Natural killer cell (primary cell): ENCODE measurements at regions of chr7 and their contacts with region 1.

Region 1: DNA sequence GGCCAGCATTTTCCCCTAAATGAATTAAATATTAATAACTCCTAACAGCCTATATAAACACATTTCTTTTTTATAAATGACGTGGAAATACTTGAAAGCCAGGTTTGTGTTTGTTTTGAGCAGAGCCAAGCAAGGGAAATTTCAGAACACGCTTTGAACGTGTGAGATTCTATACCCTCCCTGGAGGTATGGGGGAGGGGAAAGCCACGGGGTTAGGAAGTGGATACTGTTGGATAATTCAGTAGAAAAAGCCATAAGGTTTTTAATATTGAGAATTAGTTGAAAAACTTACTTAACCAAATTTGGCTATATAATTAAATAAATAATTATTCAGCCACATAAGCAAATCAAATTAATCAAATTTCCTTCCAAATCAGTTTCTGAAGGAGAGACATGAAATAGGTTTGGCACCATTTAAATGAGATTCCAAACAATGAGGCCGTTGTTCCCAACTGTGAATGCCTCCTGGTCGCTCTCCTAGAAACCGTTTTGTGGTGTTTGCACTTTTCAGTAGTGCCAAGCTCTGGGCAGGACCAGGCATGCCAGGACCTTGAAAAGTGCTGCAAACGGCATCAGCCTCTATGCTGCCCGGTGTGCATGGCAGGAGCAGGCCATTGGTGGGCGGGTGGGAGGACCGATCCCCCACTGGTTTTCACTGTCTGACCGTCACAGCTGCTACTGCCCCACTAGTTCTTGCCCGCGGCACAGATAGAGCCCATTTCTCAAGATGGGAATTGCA is 88.1 kb downstream of the SEPTIN14 start:
- DNase-seq: no peak
- ATAC-seq: no peak
- H3K4me3 ChIP-seq: no peak overlapping the region
- H3K4me3 Mint-ChIP-seq: no peak overlapping the region
- H3K27ac ChIP-seq: no peak overlapping the region
- H3K27ac Mint-ChIP-seq: no peak overlapping the region
- H3K4me1 ChIP-seq: no peaks in the 10 kb centered on the region
- H3K4me1 Mint-ChIP-seq: no peaks in the 10 kb centered on the region
- H3K27me3 ChIP-seq: no peaks in the 10 kb centered on the region
- H3K27me3 Mint-ChIP-seq: no peaks in the 10 kb centered on the region
- CTCF ChIP-seq: no peak

Region 2: DNA sequence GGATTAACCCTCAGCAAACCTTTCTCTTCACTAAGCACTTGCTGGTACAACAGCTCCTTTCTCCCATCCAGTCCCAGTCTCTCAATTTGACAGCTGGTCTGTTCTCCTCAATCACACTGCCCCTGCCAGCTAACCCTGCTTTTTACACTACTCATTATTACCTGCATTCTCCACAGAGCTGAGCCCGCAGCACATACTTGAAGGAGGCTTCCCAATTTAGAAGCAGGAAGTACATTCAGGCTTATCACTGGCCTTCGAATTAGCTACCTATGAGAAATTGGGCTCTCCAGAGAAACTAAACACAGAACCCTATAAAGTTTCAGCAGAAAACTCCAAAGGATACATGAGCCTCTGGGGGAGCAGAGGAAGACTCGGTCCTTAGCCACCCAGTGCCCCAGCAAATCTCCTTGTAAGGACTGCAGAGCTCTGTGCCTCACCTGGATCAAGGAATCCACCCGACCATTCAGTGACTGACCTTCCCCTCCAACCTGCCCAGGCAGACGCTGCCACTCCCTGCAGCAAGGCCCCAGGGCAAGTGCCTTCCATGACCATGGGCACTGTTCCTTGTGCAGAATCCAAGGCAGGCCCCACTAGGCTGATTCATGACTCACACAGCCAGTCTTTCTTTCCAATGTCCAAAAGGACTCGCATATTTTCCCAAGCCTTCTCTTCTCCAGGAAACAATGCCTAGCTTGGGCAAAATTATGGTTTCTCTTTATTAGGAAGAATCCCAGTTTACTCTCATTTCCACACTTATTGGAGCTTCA is 270.2 kb before region 1 on chr7:
- intact Hi-C with region 1: no loop called
- DNase-seq: no peak
- ATAC-seq: no peak
- H3K4me3 ChIP-seq: no peak overlapping the region
- H3K4me3 Mint-ChIP-seq: no peak overlapping the region
- H3K27ac ChIP-seq: no peak overlapping the region
- H3K27ac Mint-ChIP-seq: peak overlapping the region; percentile 70 to 79
- H3K4me1 ChIP-seq: peaks cover 2% of the 10 kb centered on the region
- H3K4me1 Mint-ChIP-seq: peaks cover 60% of the 10 kb centered on the region in 2 donors
- H3K27me3 ChIP-seq: no peaks in the 10 kb centered on the region
- H3K27me3 Mint-ChIP-seq: no peaks in the 10 kb centered on the region
- CTCF ChIP-seq: no peak

Region 3: DNA sequence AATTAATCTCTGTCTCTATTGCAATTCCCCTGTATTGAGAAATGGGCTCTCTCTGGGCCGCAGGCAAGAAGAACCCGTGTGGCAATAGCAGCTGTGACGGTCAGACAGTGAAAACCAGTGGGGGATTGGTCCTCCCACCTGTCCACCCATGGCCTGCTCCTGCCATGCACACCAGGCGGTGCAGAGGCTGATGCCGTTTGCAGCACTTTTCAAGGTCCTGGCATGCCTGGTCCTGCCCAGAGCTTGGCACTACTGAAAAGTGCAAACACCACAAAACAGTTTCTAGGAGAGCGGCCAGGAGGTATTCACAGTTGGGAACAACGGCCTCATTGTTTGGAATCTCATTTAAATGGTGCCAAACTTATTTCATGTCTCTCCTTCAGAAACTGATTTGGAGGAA is 235.2 kb after region 1 on chr7:
- intact Hi-C with region 1: loop called (anchors 10 kb)
- DNase-seq: no peak
- ATAC-seq: no peak
- H3K4me3 ChIP-seq: no peak overlapping the region
- H3K4me3 Mint-ChIP-seq: no peak overlapping the region
- H3K27ac ChIP-seq: no peak overlapping the region
- H3K27ac Mint-ChIP-seq: no peak overlapping the region
- H3K4me1 ChIP-seq: peaks cover 3% of the 10 kb centered on the region
- H3K4me1 Mint-ChIP-seq: no peaks in the 10 kb centered on the region
- H3K27me3 ChIP-seq: no peaks in the 10 kb centered on the region
- H3K27me3 Mint-ChIP-seq: no peaks in the 10 kb centered on the region
- CTCF ChIP-seq: no peak